Calu3 (cell line): ENCODE measurements at regions of chr12 and their contacts with region 1.

Region 1: DNA sequence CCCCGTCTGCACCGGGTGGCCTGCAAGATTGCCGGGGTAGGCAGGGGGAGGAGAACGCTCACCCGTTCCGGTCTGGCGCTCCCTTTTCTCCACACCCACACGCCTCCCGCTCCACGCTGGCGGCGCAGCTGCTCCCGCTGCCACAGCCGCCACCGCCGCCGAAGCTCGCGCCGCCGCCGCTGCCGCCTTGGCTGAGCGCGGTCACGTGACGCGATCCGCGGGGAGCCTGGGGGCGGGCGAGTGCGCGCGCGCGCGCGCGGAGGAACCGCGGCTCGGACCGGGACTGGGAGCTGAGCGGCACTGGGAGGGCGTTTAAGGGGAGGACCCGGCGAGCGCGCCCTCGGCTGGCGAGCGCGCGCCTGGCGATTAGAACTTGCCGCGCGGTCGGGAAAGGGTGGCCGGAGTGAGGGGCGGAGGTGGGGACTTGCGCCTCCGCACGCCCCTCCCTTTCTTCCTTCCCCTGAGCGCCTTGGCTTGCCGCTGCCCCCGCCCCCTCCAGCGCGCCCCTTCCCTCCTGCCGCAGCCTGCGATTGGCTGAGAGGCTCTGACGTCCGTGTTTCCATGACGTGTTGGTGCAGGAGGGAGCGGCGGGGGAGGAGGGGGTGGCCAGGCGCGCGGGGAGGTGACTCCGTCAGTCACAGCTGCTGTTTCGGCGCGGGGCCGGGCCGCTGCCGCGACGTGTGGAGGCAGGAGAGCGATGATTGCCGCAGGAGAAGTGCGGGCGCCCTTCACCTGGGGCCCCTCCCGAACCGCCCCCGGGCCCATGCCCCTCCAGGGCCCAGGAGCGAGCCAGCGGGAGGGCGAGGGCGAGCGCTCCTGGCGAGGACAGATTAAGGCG is 738 bp upstream of the ATP2B1 start:
- DNase-seq: peak; percentile 99
- H3K4me3 Mint-ChIP-seq: peak overlapping the region; percentile 91
- H3K27ac Mint-ChIP-seq: peak overlapping the region; percentile 100
- H3K4me1 Mint-ChIP-seq: peaks cover 24% of the 10 kb centered on the region
- H3K27me3 Mint-ChIP-seq: no peaks in the 10 kb centered on the region
- CTCF ChIP-seq: no peak

Region 2: DNA sequence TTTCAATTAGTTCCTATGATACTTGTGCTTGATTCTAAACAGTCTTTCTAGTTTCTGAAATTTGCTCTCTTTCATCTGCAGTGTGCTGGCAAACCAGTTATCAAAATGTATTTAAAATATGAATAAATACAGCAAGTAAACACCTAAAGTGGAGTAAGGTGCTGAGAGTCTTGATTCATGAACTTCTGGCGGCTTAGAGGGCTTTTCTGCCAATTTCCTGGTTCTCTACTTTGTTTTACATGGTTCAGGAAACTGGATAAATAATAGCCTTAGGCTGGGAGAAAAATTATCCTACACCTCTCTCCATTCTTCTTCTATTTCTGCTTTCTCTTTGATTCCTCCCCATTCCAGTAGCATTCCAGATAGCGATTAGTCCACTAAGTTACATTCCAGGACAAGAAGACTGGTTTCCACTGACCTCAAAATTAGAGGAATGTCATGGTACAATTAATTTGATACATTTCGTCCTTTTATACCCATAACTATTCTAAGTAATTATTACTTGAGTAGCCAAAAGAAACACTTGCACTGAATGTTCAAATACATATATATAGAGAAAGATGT is 15.7 kb before region 1 on chr12:
- CTCF ChIA-PET with region 1: no interaction called
- intact Hi-C with region 1: loop called (anchors 2 kb)
- DNase-seq: no peak
- H3K4me3 Mint-ChIP-seq: no peak overlapping the region
- H3K27ac Mint-ChIP-seq: no peak overlapping the region
- H3K4me1 Mint-ChIP-seq: peaks cover 40% of the 10 kb centered on the region
- H3K27me3 Mint-ChIP-seq: no peaks in the 10 kb centered on the region
- CTCF ChIP-seq: no peak

Region 3: GRCh38 chr12:89756585-89757321 is 47.4 kb after region 1 on chr12:
- CTCF ChIA-PET with region 1: no interaction called
- intact Hi-C with region 1: loop called (anchors 1 kb)
- DNase-seq: peak; percentile 46
- H3K4me3 Mint-ChIP-seq: peak overlapping the region; percentile 9
- H3K27ac Mint-ChIP-seq: peak overlapping the region; percentile 92
- H3K4me1 Mint-ChIP-seq: peaks cover 22% of the 10 kb centered on the region
- H3K27me3 Mint-ChIP-seq: no peaks in the 10 kb centered on the region
- CTCF ChIP-seq: no peak

Region 4: GRCh38 chr12:89893972-89894706 is 184.8 kb after region 1 on chr12:
- CTCF ChIA-PET with region 1: no interaction called
- intact Hi-C with region 1: loop called (anchors 5 kb)
- DNase-seq: no peak
- H3K4me3 Mint-ChIP-seq: peak overlapping the region; percentile 9
- H3K27ac Mint-ChIP-seq: peak overlapping the region; percentile 83
- H3K4me1 Mint-ChIP-seq: peaks cover 70% of the 10 kb centered on the region
- H3K27me3 Mint-ChIP-seq: no peaks in the 10 kb centered on the region
- CTCF ChIP-seq: no peak

Region 5: DNA sequence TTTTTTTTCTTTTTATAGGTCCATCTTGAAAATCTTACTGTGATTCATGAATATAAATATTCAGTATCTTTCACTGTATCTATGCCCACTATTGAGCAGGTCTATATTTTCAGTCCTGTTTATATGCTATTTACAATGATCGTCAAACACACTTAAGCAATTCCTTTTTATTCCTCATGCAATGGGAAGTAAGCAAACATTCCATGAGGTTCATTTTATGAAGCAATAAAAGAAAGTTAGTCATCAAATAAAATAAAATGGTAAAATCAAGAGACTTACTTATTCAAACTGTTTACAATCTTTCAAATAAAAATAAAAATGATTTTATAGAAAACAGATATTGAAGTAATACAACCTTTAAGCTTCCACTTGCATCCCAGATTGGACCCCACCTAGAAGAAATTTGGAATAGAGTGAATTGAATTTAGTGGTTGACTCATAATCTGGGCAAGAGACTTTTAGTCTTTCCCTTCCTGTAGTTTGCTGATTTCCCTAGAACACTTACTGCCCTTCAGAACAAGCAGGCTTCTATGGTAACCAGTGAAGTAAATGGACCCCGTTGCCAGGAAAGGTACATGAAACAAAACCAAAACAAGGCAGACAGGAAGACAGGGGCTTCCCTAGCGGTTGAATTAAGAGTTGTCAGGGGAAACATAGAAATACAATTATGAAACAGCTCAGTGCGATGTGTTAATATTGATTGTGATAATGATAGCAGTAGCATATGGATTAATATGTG is 240.2 kb after region 1 on chr12:
- CTCF ChIA-PET with region 1: interaction called, 4 read pairs
- intact Hi-C with region 1: loop called (anchors 5 kb)
- DNase-seq: peak; percentile 67
- H3K4me3 Mint-ChIP-seq: no peak overlapping the region
- H3K27ac Mint-ChIP-seq: peak overlapping the region; percentile 79
- H3K4me1 Mint-ChIP-seq: peaks cover 58% of the 10 kb centered on the region
- H3K27me3 Mint-ChIP-seq: no peaks in the 10 kb centered on the region
- CTCF ChIP-seq: peak; percentile 35

Region 6: GRCh38 chr12:89960011-89960507 is 250.7 kb after region 1 on chr12:
- CTCF ChIA-PET with region 1: no interaction called
- intact Hi-C with region 1: loop called (anchors 5 kb)
- DNase-seq: peak; percentile 67
- H3K4me3 Mint-ChIP-seq: no peak overlapping the region
- H3K27ac Mint-ChIP-seq: peak overlapping the region; percentile 49
- H3K4me1 Mint-ChIP-seq: peaks cover 43% of the 10 kb centered on the region
- H3K27me3 Mint-ChIP-seq: no peaks in the 10 kb centered on the region
- CTCF ChIP-seq: no peak